ENCODE measurements at regions of chr14 and their contacts with region 1.

Region 1: GRCh38 chr14:70955543-70956480 is 48.6 kb downstream of the PCNX1 start:
- DNase-seq: peak; percentile 29
- ATAC-seq: peak; percentile 71
- H3K4me3 ChIP-seq: no peak overlapping the region
- H3K27ac ChIP-seq: no peak overlapping the region
- H3K4me1 ChIP-seq: no peaks in the 10 kb centered on the region
- H3K27me3 ChIP-seq: no peaks in the 10 kb centered on the region
- CTCF ChIP-seq: peak; percentile 66
- EP300 ChIP-seq: no peak
- POLR2A ChIP-seq: no peak
- RAD21 ChIP-seq: peak; percentile 62; the same call in 1 of the 2 replicates

Region 2: DNA sequence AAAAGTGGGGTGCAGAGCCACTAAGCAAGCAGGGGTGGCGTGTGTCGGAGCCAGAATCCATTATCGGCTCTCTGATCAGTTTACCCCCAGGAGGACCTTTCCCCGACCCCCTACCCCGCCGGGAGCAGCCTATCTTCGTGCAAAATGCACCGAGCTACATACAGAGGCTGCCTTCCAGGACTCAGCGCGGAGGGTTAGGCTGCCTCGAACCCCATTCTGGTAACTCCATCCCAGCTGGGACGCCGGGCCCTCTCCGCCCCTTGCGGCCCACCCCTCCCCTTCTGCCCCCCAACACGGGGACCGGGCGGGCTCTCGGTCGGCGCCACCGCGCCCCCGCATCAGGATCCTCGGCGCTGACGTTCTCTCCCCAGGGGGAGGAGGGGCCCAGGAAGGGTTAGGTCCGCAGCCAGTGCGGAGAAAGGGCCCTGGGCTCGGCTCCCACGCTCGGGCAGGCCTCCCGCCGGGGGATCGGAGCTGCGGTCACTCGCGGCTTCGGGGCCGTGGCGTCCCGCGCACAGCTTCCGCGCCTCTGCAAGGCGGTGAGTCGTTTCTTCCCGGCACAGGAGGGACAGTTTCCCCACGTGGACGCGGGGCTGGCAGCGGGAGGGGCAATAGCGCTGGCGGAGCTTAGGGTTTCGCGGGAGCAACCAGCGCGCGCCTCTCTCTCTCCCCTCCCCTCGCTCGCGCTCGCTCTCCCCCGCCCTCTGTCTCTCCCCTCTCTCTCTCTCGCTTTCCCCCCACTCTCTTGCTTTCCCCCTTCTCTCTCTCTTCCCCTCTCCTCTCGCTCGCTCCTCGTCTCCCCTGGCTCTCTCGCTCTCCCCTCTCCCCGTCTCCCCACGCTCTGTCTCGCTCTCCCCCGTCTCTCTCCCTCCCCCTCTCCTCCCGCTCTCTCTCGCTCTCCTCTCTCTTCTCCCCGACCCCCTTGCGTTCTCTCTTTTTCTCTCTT is 134.0 kb before region 1 on chr14:
- CTCF ChIA-PET with region 1: interaction called, 9 read pairs
- POLR2A ChIA-PET with region 1: no interaction called
- in situ Hi-C with region 1: loop called (anchors 10 kb)
- intact Hi-C with region 1: loop called (anchors 1 kb)
- DNase-seq: no peak
- ATAC-seq: peak; percentile 69
- H3K4me3 ChIP-seq: peak overlapping the region; percentile 58 to 83 (median 67)
- H3K27ac ChIP-seq: no peak overlapping the region
- H3K4me1 ChIP-seq: peaks cover 17% of the 10 kb centered on the region
- H3K27me3 ChIP-seq: peaks cover 0 to 38% of the 10 kb centered on the region in 2 experiments; a peak in 3 of 5 replicates
- CTCF ChIP-seq: no peak
- EP300 ChIP-seq: no peak
- POLR2A ChIP-seq: no peak
- RAD21 ChIP-seq: no peak

Region 3: DNA sequence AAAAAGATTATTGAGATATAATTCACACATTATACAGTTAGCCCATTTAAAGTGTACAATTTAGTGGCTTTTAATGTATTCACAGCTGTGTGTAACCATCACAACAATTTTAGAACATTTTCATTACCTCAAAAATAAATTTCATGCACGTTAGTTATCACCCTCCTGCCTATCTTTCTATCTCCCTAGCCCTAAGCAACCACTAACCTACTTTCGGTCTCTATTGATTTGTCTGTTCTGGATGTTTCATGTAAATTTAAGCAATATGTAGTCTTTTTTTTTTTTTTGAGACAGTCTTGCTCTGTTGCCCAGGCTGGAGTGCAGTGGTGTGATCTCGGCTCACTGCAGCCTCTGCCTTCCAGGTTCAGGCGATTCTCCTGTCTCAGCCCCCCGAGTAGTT is 390.9 kb after region 1 on chr14:
- CTCF ChIA-PET with region 1: no interaction called
- POLR2A ChIA-PET with region 1: no interaction called
- in situ Hi-C with region 1: no loop called
- intact Hi-C with region 1: no loop called
- DNase-seq: no peak
- ATAC-seq: no peak
- H3K4me3 ChIP-seq: no peak overlapping the region
- H3K27ac ChIP-seq: no peak overlapping the region
- H3K4me1 ChIP-seq: peaks cover 9% of the 10 kb centered on the region
- H3K27me3 ChIP-seq: no peaks in the 10 kb centered on the region
- CTCF ChIP-seq: no peak
- EP300 ChIP-seq: no peak
- POLR2A ChIP-seq: no peak
- RAD21 ChIP-seq: no peak